GM12878 (cell line): ENCODE measurements at regions of chr6 and their contacts with region 1.

Region 1: DNA sequence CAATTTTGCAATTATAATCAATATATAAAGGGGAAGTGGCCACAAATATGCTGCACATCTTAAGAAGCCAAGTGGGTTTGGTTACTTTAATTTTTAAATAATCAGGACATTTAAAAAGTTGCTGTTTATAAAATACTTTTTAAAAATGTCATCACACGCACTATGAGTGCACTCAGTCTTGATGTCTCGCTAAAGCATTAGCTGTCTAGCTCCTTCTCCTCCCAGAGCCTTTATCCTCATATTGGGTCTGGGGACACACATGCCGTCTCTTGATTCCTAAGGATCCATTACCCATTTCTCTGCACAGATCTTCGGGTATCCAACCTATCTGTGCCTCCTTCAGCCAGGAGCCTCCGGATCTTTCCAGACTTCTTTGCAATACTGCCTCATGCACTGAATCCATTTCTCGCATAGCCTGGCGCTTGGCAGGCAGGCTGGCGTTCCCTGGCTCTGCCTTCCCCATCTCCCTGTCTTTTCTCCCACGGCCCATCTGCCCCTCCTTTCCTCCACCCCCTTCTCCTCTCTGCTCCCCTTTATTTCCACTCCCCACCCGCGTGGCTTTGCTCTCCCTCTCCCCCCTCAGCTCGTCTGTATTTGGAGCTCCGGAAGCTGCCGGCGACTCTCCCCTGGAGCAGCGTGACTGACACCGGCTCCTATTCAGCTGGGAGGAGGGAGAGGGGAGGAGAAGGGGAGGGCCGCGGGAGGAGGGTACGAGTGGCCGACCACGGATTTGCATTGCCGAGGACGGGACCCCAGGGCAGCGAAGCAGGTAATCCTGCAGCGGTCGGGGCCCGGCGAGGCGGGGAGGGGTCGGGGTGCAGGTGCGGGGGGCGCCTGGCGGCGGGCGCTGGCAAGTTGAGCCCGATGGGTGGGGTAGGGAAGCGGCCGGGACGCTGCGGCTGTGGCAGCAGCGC is at the start of gene CAP2:
- DNase-seq: no peak
- ATAC-seq: peak; percentile 63
- H3K4me3 ChIP-seq: no peak within 1 kb of the TSS
- H3K27ac ChIP-seq: no peak within 1 kb of the TSS
- H3K4me1 ChIP-seq: no peaks in the 10 kb centered on the region
- H3K27me3 ChIP-seq: peaks cover 4 to 6% of the 10 kb centered on the region in 2 experiments; a peak in 3 of 4 replicates
- CTCF ChIP-seq: no peak
- EP300 ChIP-seq: no peak
- POLR2A ChIP-seq: no peak
- RAD21 ChIP-seq: no peak
- polyA plus RNA-seq, gene CAP2: not detected

Region 2: GRCh38 chr6:16947375-16948015 is 445.7 kb before region 1 on chr6:
- CTCF ChIA-PET with region 1: no interaction called
- POLR2A ChIA-PET with region 1: no interaction called
- RAD21 ChIA-PET with region 1: no interaction called
- SMC1A ChIA-PET with region 1: no interaction called
- in situ Hi-C with region 1: no loop called
- intact Hi-C with region 1: no loop called
- DNase-seq: no peak
- ATAC-seq: no peak
- H3K4me3 ChIP-seq: no peak overlapping the region
- H3K27ac ChIP-seq: no peak overlapping the region
- H3K4me1 ChIP-seq: no peaks in the 10 kb centered on the region
- H3K27me3 ChIP-seq: peaks cover 0 to 7% of the 10 kb centered on the region in 2 experiments; a peak in 2 of 4 replicates
- CTCF ChIP-seq: no peak
- EP300 ChIP-seq: no peak
- POLR2A ChIP-seq: no peak
- RAD21 ChIP-seq: no peak

Region 3: DNA sequence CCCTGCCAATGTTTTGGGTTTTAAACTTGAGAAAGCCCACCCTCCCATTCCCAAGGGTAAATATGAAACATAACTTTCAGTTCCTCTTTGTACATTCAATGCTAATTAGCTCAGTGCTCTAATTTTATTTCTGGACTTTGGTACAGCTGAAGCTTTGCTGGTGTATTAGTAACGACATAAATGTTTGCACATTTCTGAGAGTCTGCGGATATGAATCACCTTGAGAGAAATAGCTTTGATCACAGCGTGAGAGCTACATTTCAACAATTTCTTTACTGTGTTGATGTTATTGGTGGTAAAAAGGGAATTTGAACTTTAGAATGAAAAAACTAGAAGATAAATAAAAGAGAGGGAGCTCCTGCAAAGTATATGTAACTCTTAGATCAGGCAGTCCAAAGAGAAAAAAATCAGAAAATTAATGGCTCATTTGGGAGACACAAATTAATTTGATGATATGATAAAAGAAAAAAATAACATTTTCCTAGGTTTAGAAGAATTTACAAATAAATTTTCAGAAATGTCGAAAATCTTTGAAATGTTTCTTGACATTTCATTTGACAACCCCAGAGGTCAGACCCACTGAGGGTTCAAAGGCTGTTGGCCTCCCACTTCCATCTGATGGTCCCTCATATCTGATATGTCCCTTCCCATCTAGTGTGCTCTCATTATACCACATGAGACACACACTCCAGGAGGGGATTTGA is 38.4 kb before region 1 on chr6:
- CTCF ChIA-PET with region 1: interaction called, 3 read pairs
- POLR2A ChIA-PET with region 1: interaction called, 7 read pairs
- RAD21 ChIA-PET with region 1: interaction called, 10 read pairs
- SMC1A ChIA-PET with region 1: interaction called, 9 read pairs
- in situ Hi-C with region 1: no loop called
- intact Hi-C with region 1: no loop called
- DNase-seq: peak; percentile 4
- ATAC-seq: peak; percentile 83
- H3K4me3 ChIP-seq: no peak overlapping the region
- H3K27ac ChIP-seq: no peak overlapping the region
- H3K4me1 ChIP-seq: no peaks in the 10 kb centered on the region
- H3K27me3 ChIP-seq: no peaks in the 10 kb centered on the region
- CTCF ChIP-seq: no peak
- EP300 ChIP-seq: no peak
- POLR2A ChIP-seq: no peak
- RAD21 ChIP-seq: no peak

Region 4: DNA sequence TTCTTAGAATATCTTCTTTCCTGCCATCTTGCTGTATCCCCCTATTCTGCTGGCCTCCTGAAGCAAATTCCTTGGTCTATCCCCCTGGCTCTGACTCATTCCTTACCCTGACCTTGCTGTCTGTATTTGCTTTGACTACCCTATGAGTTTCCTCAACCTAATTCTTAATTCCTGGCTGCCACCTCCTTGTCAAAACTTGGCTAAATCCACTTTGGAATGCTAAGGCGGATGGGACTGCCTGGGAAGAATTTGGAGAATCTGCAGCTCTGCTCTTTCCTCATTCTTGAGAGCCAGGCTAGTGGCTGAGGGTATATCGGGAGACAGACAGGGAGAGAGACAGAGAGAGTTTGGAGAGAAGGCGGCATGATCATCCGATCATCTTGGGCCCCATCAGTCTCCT is 24.6 kb after region 1 on chr6:
- CTCF ChIA-PET with region 1: interaction called, 4 read pairs
- POLR2A ChIA-PET with region 1: interaction called, 3 read pairs
- RAD21 ChIA-PET with region 1: interaction called, 4 read pairs
- SMC1A ChIA-PET with region 1: interaction called, 11 read pairs
- in situ Hi-C with region 1: no loop called
- intact Hi-C with region 1: no loop called
- DNase-seq: no peak
- ATAC-seq: no peak
- H3K4me3 ChIP-seq: no peak overlapping the region
- H3K27ac ChIP-seq: no peak overlapping the region
- H3K4me1 ChIP-seq: no peaks in the 10 kb centered on the region
- H3K27me3 ChIP-seq: no peaks in the 10 kb centered on the region
- CTCF ChIP-seq: no peak
- EP300 ChIP-seq: no peak
- POLR2A ChIP-seq: no peak
- RAD21 ChIP-seq: no peak